ENCODE measurements at regions of chr3 and their contacts with region 1.

Region 1: GRCh38 chr3:197256836-197257444 is 41.5 kb downstream of the DLG1 start:
- DNase-seq: peak; percentile 67
- H3K4me3 Mint-ChIP-seq: no peak overlapping the region
- H3K27ac Mint-ChIP-seq: no peak overlapping the region
- H3K4me1 Mint-ChIP-seq: peaks cover 64% of the 10 kb centered on the region
- H3K27me3 Mint-ChIP-seq: no peaks in the 10 kb centered on the region

Region 2: GRCh38 chr3:197181741-197182140 is 75.2 kb before region 1 on chr3:
- CTCF ChIA-PET with region 1: no interaction called
- intact Hi-C with region 1: no loop called
- DNase-seq: no peak
- H3K4me3 Mint-ChIP-seq: no peak overlapping the region
- H3K27ac Mint-ChIP-seq: no peak overlapping the region
- H3K4me1 Mint-ChIP-seq: no peaks in the 10 kb centered on the region
- H3K27me3 Mint-ChIP-seq: no peaks in the 10 kb centered on the region

Region 3: DNA sequence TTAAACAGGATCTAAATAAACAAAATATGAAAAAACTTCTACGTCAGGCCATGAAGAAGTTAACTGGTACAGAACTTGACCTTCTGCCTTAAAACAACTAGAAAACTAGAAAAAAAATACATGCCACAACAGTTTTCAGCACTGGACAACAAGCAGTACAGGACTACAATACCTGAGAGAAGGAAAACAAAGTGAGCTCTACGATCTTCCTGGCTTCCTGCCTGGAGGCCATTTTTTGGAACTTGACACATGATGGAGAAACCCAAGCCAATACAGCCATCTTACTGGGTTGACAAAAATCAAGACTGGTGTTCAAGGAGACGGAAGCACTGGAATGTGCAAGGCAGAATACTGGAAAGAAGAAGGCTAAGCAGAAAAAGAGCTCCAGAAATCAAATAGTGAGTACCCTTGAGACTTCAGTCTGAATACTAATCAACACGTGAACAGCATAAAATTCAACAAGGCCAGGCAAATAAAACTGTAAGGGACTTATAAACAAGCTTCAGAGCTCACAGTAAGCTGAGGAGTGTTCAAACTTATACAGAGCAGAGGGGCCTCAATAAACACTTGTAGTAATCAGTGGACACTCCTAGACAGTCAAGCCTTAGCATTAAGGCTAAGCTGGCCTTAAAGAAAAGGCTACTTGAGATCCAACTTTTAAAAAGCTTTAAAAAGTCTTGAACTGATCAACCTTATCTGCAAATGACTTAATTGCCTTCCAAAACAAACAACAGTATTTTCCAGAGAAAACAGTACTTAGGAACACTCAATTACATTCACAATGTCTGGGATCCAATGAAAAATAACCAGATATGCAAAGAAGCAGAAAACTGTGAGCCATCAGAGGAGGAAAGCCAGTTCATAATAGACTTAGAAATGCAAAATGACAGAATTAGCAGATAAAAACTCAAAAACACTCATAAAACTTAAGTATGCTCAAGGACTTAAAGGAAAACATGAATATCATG is 21.7 kb before region 1 on chr3:
- CTCF ChIA-PET with region 1: interaction called, 22 read pairs
- intact Hi-C with region 1: no loop called
- DNase-seq: no peak
- H3K4me3 Mint-ChIP-seq: no peak overlapping the region
- H3K27ac Mint-ChIP-seq: no peak overlapping the region
- H3K4me1 Mint-ChIP-seq: peaks cover 45% of the 10 kb centered on the region
- H3K27me3 Mint-ChIP-seq: no peaks in the 10 kb centered on the region

Region 4: DNA sequence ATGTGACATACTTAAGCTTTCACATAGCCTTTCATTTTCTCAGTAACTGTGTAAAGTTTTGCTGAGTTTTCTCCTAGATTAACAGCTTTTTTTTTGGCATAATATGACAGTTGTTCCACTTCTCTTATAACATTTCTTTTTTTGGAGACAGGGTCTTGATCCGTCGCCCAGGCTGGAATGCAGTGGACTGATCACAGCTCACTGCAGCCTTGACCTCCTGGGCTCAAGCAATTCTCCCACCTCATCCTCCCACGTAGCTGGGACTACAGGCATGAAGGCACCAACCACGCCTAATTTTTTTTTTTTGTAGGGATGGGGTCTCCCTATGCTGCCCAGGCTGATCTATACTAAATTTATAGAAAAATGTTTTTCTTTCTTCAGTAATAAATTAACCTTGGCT is 11.4 kb after region 1 on chr3:
- CTCF ChIA-PET with region 1: interaction called, 48 read pairs
- intact Hi-C with region 1: no loop called
- DNase-seq: no peak
- H3K4me3 Mint-ChIP-seq: no peak overlapping the region
- H3K27ac Mint-ChIP-seq: no peak overlapping the region
- H3K4me1 Mint-ChIP-seq: peaks cover 43% of the 10 kb centered on the region
- H3K27me3 Mint-ChIP-seq: no peaks in the 10 kb centered on the region

Region 5: GRCh38 chr3:197456261-197457091 is 199.5 kb after region 1 on chr3:
- CTCF ChIA-PET with region 1: interaction called, 17 read pairs
- intact Hi-C with region 1: loop called (anchors 1 kb)
- DNase-seq: peak; percentile 75
- H3K4me3 Mint-ChIP-seq: peak overlapping the region; percentile 79
- H3K27ac Mint-ChIP-seq: peak overlapping the region; percentile 87
- H3K4me1 Mint-ChIP-seq: peaks cover 11% of the 10 kb centered on the region
- H3K27me3 Mint-ChIP-seq: no peaks in the 10 kb centered on the region

Region 6: DNA sequence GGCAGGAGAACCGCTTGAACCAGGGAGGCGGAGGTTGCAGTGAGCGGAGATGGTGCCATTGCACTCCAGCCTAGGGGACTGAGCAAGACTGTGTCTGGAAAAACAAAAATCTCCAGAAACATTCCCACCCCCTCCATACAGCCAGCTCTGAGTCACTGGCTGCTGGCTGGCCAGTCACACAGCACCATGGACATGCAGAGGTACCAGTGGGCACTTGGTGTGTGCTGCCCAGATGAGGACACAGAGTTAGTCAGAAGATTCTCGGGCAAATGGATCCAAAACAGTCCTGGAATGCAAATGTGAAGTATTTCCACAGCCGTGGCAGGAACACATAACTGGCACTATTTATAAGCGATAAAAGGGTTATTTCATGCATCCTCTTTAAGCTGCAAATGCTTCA is 254.2 kb after region 1 on chr3:
- CTCF ChIA-PET with region 1: interaction called, 14 read pairs
- intact Hi-C with region 1: loop called (anchors 1 kb)
- DNase-seq: no peak
- H3K4me3 Mint-ChIP-seq: no peak overlapping the region
- H3K27ac Mint-ChIP-seq: no peak overlapping the region
- H3K4me1 Mint-ChIP-seq: peaks cover 6% of the 10 kb centered on the region
- H3K27me3 Mint-ChIP-seq: no peaks in the 10 kb centered on the region

Measured in activated naive CD4-positive, alpha-beta T cell treated with anti-CD3 and anti-CD28 coated beads for 36 hours (primary cell).